ENCODE measurements at regions of chr3 and their contacts with region 1.

Region 1: GRCh38 chr3:48439820-48440589 is at the starts of genes CCDC51 and TMA7:
- DNase-seq: peak; percentile 99
- H3K4me3 Mint-ChIP-seq: peak within 1 kb of the TSS; percentile 85
- H3K27ac Mint-ChIP-seq: peak within 1 kb of the TSS; percentile 91
- H3K4me1 Mint-ChIP-seq: peaks cover 52% of the 10 kb centered on the region
- H3K27me3 Mint-ChIP-seq: no peaks in the 10 kb centered on the region

Region 2: DNA sequence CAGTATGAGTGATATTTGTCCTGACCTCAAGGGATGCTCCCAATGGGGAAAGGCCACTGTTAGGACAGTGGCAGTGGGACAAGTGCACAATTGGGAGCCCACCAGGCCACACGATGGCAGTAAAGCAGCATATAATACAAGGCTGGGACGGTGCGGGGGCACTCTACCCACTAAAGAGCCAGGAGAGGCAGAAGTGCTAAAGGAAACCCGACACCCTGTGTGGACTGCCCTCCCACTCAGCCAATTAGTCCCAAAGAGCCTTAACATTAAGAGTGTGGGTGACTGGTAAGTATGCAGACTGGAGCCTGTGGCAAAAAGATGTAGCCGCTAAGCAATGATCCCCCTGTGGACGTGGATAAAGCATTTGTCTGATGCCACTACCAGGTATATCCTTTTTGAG is 207.3 kb before region 1 on chr3:
- CTCF ChIA-PET with region 1: interaction called, 17 read pairs
- DNase-seq: peak; percentile 73
- H3K4me3 Mint-ChIP-seq: no peak overlapping the region
- H3K27ac Mint-ChIP-seq: no peak overlapping the region
- H3K4me1 Mint-ChIP-seq: peaks cover 5% of the 10 kb centered on the region
- H3K27me3 Mint-ChIP-seq: peaks cover 8% of the 10 kb centered on the region

Region 3: GRCh38 chr3:48278884-48279559 is 161.0 kb before region 1 on chr3:
- CTCF ChIA-PET with region 1: interaction called, 110 read pairs
- DNase-seq: no peak
- H3K4me3 Mint-ChIP-seq: no peak overlapping the region
- H3K27ac Mint-ChIP-seq: no peak overlapping the region
- H3K4me1 Mint-ChIP-seq: no peaks in the 10 kb centered on the region
- H3K27me3 Mint-ChIP-seq: peaks cover 8% of the 10 kb centered on the region

Region 4: GRCh38 chr3:48415554-48415953 is 24.5 kb before region 1 on chr3:
- CTCF ChIA-PET with region 1: interaction called, 10 read pairs
- DNase-seq: no peak
- H3K4me3 Mint-ChIP-seq: no peak overlapping the region
- H3K27ac Mint-ChIP-seq: no peak overlapping the region
- H3K4me1 Mint-ChIP-seq: no peaks in the 10 kb centered on the region
- H3K27me3 Mint-ChIP-seq: no peaks in the 10 kb centered on the region

Region 5: GRCh38 chr3:48472915-48473616 is 33.1 kb after region 1 on chr3:
- CTCF ChIA-PET with region 1: interaction called, 18 read pairs
- DNase-seq: peak; percentile 97
- H3K4me3 Mint-ChIP-seq: peak overlapping the region; percentile 80
- H3K27ac Mint-ChIP-seq: peak overlapping the region; percentile 97
- H3K4me1 Mint-ChIP-seq: peaks cover 76% of the 10 kb centered on the region
- H3K27me3 Mint-ChIP-seq: no peaks in the 10 kb centered on the region

Region 6: DNA sequence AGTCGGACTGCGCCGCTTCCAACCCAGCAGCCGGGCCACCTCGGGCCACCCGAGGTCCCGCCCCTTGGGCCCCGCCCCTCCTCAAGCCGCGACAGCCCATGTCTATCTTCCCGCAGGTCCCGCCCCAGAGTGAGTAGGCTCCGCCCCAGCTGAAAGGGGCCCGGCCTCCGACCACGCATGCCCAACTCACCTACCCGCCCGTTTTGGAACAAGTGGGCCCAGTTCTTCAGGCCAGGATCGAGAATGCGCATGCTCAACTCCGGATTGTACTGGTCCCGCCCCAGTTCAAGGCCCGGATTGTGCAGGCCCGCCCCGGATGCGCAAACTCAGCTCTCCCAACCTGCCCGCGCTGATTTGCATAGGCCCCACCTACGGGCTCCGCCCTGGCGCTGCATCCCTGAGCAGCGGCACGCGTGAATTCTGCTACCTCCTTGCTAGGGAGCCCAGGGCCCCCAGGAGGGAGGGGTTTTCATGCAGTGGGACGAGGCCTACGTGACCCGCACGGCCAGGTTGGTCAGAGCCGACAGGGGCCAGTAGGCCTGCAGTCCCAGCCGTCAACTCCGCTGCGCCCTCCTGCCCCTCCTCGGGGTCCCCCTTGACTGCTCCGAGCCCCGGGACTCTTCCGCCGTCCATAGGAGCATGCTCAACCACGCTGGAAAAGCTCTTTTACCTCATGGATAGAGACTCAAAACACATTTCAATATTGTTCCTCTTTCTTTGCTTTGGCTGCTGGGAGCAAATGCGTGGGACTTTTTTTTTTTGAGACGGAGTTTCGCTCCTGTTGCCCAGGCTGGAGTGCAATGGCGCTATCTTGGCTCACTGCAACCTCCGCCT is 117.0 kb after region 1 on chr3 and contains the start of gene PFKFB4:
- CTCF ChIA-PET with region 1: interaction called, 91 read pairs
- DNase-seq: peak; percentile 100
- H3K4me3 Mint-ChIP-seq: peak within 1 kb of the TSS; percentile 82
- H3K27ac Mint-ChIP-seq: peak within 1 kb of the TSS; percentile 87
- H3K4me1 Mint-ChIP-seq: peaks cover 61% of the 10 kb centered on the region
- H3K27me3 Mint-ChIP-seq: peaks cover 22% of the 10 kb centered on the region

Measured in activated naive CD4-positive, alpha-beta T cell treated with anti-CD3 and anti-CD28 coated beads, Interleukin-2, amount 10 ng/mL, durations not matched to agents 7 days and 5 days (primary cell).